ENCODE measurements at regions of chr12 and their contacts with region 1.

Region 1: DNA sequence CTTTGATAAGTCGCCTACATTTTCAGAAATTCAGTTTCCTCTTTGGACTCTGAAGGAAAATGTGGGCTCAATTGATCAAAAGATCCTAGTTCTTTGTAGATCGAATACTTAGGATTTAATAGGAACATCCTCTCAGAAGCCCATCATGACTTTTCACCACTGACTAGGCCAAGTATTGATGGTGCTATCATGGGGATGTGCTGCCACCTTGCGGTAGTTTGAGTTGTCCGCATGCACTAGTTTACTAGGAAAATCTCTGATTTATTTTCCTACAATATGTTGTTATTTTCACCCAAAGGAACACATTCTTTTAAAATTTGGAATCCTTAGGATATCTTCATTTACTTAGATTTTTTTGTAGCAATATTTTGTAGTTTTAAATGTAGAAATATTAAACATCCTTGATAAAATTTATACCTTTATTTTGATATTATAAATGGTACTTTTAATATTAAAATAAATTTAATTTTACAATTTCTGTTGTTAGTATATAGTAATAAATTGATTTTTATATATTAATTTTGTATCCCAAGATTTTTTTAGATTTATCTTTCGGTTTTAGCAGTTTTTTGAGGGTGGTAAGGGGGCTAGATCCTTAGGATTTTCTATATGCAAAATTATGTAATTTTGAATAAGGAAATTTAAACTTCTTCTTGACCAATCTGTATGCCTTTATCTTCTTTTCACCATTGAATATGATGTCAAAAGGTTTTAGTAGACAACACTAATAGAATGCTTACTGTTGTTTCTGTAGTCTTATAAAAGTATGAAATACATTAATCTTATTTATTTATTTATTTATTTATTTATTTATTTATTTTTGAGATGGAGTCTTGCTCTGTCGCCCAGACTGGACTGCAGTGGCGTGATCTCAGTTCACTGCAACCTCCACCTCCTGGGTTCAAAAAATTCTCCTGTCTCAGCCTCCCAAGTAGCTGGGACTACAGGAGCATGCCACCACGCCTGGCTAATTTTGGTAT is 52.9 kb upstream of the OR9K2 start:
- DNase-seq: peak; percentile 67
- H3K4me3 ChIP-seq: no peak overlapping the region
- H3K27ac ChIP-seq: no peak overlapping the region
- H3K4me1 ChIP-seq: no peaks in the 10 kb centered on the region
- H3K27me3 ChIP-seq: peaks cover 0 to 4% of the 10 kb centered on the region in 2 experiments
- CTCF ChIP-seq: peak; percentile 66 to 75
- POLR2A ChIP-seq: no peak

Region 2: DNA sequence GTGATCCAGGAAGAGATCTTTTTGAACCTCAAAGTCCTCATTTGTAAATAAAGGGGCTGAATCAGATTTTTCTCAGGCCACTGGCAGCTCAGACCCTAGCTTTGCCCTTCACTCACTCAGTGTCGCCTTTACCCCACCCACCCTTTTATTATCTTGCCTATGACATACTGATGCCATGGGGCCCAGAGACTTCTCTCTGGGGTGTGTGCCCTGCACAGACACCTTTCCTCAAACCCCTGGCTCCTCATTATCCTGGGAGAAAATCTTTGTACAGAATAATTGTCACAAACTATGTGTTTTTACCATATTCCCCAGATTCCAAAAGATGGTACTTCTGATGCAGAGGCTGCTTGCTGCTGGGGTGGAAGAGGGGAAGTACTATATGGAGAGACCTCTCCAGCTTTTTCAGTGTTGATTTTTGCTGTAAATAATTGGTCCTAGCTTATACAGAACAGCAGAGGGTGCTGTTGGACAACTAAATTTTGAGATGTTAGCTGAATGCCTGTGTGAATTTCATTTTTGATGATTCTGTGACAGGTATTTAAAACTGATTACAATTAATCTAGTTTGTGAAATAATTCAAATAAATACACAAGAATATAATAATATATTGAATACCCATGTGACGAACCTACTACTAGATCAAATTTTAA is 371.3 kb before region 1 on chr12:
- CTCF ChIA-PET with region 1: interaction called, 53 read pairs
- POLR2A ChIA-PET with region 1: no interaction called
- dilution Hi-C with region 1: no loop called
- intact Hi-C with region 1: loop called (anchors 2 kb)
- DNase-seq: peak; percentile 28
- H3K4me3 ChIP-seq: no peak overlapping the region
- H3K27ac ChIP-seq: no peak overlapping the region
- H3K4me1 ChIP-seq: no peaks in the 10 kb centered on the region
- H3K27me3 ChIP-seq: peaks cover 3 to 7% of the 10 kb centered on the region in 2 experiments
- CTCF ChIP-seq: peak; percentile 41 to 46
- POLR2A ChIP-seq: no peak

Region 3: DNA sequence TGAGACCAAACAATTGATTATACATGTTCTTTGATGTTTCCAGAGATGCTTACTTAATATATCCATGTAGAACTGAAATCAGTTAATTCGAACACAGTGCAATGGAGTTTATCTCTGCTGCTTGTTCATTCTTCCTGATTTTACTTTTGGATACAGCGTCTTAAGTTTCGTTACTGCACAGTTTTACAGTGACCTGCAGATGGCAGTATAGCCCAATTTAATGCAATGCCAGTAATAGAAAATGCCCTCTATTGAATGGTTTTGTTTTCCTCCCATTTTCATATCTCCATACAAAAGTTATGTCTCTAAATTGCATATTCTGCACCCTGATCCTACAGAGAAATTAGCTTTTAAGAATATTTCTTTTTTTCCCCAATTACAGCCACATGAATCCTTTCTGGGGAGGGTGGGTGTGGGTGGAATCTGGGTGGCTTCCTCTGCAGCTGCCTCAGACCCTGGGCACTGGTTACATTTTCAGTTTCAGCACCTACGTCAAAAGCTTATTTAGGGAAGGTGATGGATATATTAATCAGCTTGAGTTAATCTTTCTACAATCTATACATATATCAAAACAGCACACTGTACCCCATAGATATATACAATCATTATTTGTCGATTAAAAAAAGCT is 324.0 kb before region 1 on chr12:
- CTCF ChIA-PET with region 1: interaction called, 22 read pairs
- POLR2A ChIA-PET with region 1: no interaction called
- dilution Hi-C with region 1: no loop called
- intact Hi-C with region 1: loop called (anchors 1 kb)
- DNase-seq: peak; percentile 41
- H3K4me3 ChIP-seq: no peak overlapping the region
- H3K27ac ChIP-seq: no peak overlapping the region
- H3K4me1 ChIP-seq: no peaks in the 10 kb centered on the region
- H3K27me3 ChIP-seq: peaks cover 0 to 2% of the 10 kb centered on the region in 2 experiments
- CTCF ChIP-seq: peak; percentile 53 to 57
- POLR2A ChIP-seq: no peak

Region 4: DNA sequence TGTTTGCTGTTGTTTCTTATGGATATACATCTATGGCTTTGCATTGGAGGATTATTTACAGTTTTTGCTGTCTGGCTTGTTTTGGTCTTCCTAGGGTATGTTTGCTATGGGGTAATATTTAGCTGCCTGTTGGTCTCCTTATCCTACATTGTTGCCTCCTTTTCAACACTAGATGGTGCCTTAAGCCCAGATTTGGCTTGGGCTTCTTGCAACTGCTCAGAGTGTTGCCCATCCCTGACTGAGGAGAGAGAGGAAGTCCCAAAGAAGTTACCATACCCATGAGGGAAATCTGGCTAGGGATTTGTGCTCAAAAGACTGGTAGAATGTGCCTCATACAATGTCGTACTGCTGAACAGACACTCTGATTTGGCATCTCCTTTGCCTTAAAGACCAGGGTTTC is 313.6 kb before region 1 on chr12:
- CTCF ChIA-PET with region 1: interaction called, 10 read pairs
- POLR2A ChIA-PET with region 1: no interaction called
- dilution Hi-C with region 1: no loop called
- intact Hi-C with region 1: no loop called
- DNase-seq: no peak
- H3K4me3 ChIP-seq: no peak overlapping the region
- H3K27ac ChIP-seq: no peak overlapping the region
- H3K4me1 ChIP-seq: no peaks in the 10 kb centered on the region
- H3K27me3 ChIP-seq: no peaks in the 10 kb centered on the region
- CTCF ChIP-seq: peak in 1 of 2 donors; percentile 6
- POLR2A ChIP-seq: no peak

Region 5: GRCh38 chr12:54853995-54854566 is 219.3 kb before region 1 on chr12 and contains the start of gene MUCL1:
- CTCF ChIA-PET with region 1: interaction called, 4 read pairs
- POLR2A ChIA-PET with region 1: no interaction called
- dilution Hi-C with region 1: no loop called
- intact Hi-C with region 1: loop called (anchors 1 kb)
- DNase-seq: peak; percentile 69
- H3K4me3 ChIP-seq: no peak within 1 kb of the TSS
- H3K27ac ChIP-seq: no peak within 1 kb of the TSS
- H3K4me1 ChIP-seq: no peaks in the 10 kb centered on the region
- H3K27me3 ChIP-seq: peaks cover 3 to 11% of the 10 kb centered on the region in 2 experiments
- CTCF ChIP-seq: peak; percentile 73 to 81
- POLR2A ChIP-seq: no peak
- total RNA-seq, gene MUCL1: not detected in 2 replicates

Region 6: GRCh38 chr12:55060470-55060869 is 12.9 kb before region 1 on chr12:
- CTCF ChIA-PET with region 1: interaction called, 15 read pairs
- POLR2A ChIA-PET with region 1: no interaction called
- dilution Hi-C with region 1: no loop called
- intact Hi-C with region 1: no loop called
- DNase-seq: no peak
- H3K4me3 ChIP-seq: no peak overlapping the region
- H3K27ac ChIP-seq: no peak overlapping the region
- H3K4me1 ChIP-seq: no peaks in the 10 kb centered on the region
- H3K27me3 ChIP-seq: peaks cover 5% of the 10 kb centered on the region in 2 experiments
- CTCF ChIP-seq: no peak
- POLR2A ChIP-seq: no peak

Region 7: GRCh38 chr12:55112378-55112777 is 39.0 kb after region 1 on chr12:
- CTCF ChIA-PET with region 1: no interaction called
- POLR2A ChIA-PET with region 1: no interaction called
- dilution Hi-C with region 1: no loop called
- intact Hi-C with region 1: no loop called
- DNase-seq: no peak
- H3K4me3 ChIP-seq: no peak overlapping the region
- H3K27ac ChIP-seq: no peak overlapping the region
- H3K4me1 ChIP-seq: no peaks in the 10 kb centered on the region
- H3K27me3 ChIP-seq: no peaks in the 10 kb centered on the region
- CTCF ChIP-seq: no peak
- POLR2A ChIP-seq: no peak

Region 8: GRCh38 chr12:55246159-55246558 is 172.8 kb after region 1 on chr12:
- CTCF ChIA-PET with region 1: no interaction called
- POLR2A ChIA-PET with region 1: no interaction called
- dilution Hi-C with region 1: no loop called
- intact Hi-C with region 1: no loop called
- DNase-seq: no peak
- H3K4me3 ChIP-seq: no peak overlapping the region
- H3K27ac ChIP-seq: no peak overlapping the region
- H3K4me1 ChIP-seq: no peaks in the 10 kb centered on the region
- H3K27me3 ChIP-seq: no peaks in the 10 kb centered on the region
- CTCF ChIP-seq: no peak
- POLR2A ChIP-seq: no peak

Region 9: DNA sequence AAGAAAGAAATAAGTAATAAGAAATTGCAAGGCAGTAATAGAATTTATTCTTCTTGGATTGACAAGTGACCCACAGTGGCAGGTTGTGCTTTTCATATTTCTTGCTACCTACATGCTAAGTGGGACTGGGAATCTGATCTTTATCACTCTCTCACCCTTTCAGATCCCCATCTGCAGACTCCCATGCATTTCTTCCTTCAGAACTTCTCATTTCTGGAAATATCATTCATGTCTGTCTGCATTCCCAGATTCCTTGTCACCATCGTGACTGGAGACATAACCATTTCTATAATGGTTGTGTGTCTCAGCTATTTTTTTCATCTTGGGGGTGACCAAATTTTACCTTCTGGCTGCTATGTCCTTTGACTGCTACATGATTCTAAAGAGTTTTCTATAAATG is 323.0 kb after region 1 on chr12:
- CTCF ChIA-PET with region 1: no interaction called
- POLR2A ChIA-PET with region 1: no interaction called
- dilution Hi-C with region 1: no loop called
- intact Hi-C with region 1: no loop called
- DNase-seq: no peak
- H3K4me3 ChIP-seq: no peak overlapping the region
- H3K27ac ChIP-seq: no peak overlapping the region
- H3K4me1 ChIP-seq: no peaks in the 10 kb centered on the region
- H3K27me3 ChIP-seq: no peaks in the 10 kb centered on the region
- CTCF ChIP-seq: no peak
- POLR2A ChIP-seq: no peak

Measured in endothelial cell of umbilical vein (primary cell).